Right ventricle myocardium inferior (tissue), 1 donor: ENCODE measurements at regions of chr19 and their contacts with region 1.

Region 1: DNA sequence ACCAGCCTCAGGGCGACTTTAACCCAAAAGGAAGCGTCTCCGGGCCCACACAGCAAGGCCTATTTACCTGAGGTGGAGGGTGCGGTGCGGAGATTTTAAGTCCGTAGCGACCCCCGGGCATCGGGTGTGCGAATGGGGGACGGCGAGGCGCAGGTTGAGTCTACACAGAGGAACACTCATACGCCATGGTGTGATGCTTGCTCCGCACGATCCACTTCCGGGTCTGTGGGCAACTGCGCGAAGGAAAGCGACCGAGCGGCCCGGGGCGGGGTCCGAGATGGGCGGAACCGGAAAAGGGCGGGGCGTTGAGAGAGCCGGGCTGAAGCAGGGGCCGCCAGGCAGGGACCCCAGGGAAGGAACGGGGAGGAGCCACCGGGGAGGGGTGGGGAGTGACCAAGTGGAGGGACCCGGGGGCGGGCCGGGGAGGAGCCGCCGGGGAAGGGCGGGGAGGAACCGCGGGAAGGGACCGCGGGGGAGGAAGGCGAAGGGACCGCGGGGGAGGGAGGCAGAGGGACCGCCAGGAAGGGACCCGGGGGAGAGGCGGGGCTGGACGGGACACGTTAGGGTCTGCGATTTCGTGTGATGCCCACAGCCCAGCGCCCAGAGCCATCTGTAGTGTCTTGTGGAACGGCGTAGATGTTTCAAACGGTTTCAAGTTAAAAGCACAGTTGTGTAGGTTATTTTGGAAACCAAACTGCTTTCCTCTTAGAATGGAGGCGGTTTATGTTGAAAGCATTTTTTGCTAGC is at the start of gene ZNF160:
- DNase-seq: peak; percentile 98
- ATAC-seq: peak; percentile 100
- total RNA-seq, gene ZNF160: 16.5 TPM

Region 2: DNA sequence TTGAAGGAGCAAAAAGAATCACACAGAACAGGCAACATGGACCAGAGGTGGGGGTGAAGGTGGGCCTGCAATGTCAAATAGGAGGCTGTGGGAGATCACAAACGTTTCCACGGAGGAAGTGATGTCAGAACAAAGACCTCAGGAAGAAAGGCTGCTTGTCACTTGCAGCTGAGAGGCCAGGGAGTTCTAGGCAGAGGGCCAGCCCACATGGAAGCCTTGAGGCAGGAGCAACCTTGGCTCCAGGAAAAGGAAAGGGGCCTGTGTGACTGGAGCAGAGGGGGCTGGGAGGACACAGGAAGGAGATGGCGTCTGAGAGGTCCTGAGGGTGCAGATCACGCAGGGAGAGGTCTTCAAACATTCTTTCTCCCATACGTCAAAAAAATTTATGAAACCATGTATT is 16.4 kb before region 1 on chr19:
- intact Hi-C with region 1: loop called (anchors 2 kb)
- DNase-seq: peak; percentile 65
- ATAC-seq: peak; percentile 55

Region 3: DNA sequence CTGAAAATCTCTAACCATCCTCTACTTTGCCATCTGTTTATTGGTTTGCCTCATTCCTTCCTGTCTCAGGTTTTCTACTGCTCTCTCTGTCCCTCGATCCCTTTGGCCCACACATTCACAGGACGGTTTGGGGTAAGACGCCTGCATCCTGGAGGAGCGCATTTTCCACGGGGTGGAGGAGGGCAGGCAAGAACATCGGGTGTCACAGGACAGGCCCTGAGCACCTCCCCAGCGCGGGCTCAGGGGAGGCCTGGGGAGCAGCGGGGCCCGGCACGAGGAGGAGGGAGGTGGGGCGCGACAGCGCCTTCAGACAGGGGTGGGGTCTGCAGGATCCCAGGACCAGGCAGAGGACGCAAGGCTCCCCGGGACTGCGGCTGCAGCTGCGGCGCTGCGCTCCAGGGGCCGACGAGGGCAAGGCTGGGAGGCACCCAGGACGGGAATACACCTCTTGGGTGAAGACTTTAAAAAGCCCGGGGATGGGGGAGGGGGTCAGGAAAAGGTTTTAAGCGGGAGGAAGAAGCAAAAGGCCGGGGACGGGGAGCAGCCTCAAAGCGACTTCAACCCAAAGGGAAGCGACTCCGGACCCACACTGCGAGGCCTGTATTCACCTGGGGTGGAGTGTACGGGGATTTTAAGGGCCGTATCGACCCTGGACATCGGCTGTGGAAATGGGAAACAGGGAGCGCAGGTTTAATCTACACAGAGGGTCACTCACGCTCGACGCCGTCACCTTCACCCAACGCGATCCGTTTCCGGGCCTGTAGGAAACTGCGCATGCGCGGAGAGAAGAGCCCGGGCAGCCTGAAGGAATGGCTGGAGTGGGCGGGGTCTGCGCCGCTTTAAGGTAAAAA is 29.0 kb after region 1 on chr19 and contains the start of gene ZNF415:
- intact Hi-C with region 1: loop called (anchors 1 kb)
- DNase-seq: peak; percentile 88
- ATAC-seq: peak; percentile 89
- total RNA-seq, gene ZNF415: 18.6 TPM

Region 4: GRCh38 chr19:53158119-53158656 is 54.8 kb after region 1 on chr19:
- intact Hi-C with region 1: loop called (anchors 5 kb)
- DNase-seq: no peak
- ATAC-seq: peak; percentile 28